ENCODE measurements at regions of chr4 and their contacts with region 1.

Region 1: DNA sequence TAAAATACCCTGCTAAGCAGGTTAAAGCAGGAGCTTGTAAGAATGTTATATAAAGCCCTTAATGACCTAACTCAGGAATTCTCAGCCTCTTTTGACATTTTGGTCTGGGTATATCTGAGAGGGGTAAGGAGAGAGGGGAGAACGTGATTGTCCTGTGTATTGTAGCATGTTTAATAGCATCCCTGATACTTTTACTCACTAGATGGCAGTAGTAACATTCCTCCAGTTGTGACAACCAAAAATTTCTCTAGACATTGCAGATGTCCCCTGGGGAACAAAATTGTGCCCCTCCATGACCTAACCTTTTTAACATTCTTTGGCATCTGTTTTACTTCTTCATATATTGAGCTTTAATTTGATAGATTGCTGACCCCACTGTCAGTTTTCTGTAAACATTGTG is 17.9 kb downstream of the SMARCA5 start:
- DNase-seq: peak; percentile 4
- ATAC-seq: peak; percentile 75
- H3K4me3 ChIP-seq: no peak overlapping the region
- H3K27ac ChIP-seq: no peak overlapping the region
- H3K4me1 ChIP-seq: no peaks in the 10 kb centered on the region
- H3K27me3 ChIP-seq: no peaks in the 10 kb centered on the region
- CTCF ChIP-seq: peak; percentile 40
- EP300 ChIP-seq: no peak
- POLR2A ChIP-seq: no peak
- RAD21 ChIP-seq: no peak

Region 2: DNA sequence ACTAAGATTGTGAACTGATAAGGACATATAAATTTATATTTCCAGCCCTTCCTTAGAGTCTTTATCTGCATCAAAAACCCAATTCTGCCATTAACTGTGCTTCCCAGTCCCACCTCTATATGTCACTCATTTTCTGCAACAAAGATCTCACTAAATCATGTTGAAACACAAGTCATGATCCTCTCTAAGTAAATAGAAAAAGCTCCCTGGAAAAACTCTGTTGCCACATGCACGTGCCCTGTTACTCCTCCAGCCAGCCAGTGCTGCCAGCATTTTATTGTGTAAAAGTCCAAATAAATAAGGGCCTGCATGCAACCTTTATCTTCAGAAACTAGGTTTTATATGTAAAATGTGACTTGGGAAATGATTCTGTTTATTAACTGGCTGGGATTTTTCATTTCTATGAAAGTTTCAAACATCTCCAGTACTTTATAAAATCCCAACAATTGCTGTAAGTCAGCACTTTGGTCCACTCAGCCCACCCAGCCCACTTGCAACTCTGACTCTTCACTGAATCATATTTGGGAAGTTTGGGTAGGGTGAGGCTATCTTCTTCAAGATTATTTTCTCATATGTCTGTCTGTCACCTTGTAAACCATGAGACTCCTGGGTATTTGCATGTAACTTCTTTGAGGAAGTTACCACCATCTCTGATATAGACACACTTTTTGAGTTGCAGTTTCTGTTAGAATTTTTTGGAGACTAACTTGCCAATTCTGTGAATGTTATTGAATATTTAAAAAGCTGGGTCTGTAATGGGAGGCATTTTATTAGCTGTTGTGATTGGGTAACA is 57.9 kb before region 1 on chr4:
- CTCF ChIA-PET with region 1: no interaction called
- POLR2A ChIA-PET with region 1: no interaction called
- in situ Hi-C with region 1: no loop called
- intact Hi-C with region 1: no loop called
- DNase-seq: peak; percentile 17
- ATAC-seq: no peak; the same call in 2 of the 3 replicates
- H3K4me3 ChIP-seq: no peak overlapping the region
- H3K27ac ChIP-seq: no peak overlapping the region
- H3K4me1 ChIP-seq: no peaks in the 10 kb centered on the region
- H3K27me3 ChIP-seq: no peaks in the 10 kb centered on the region
- CTCF ChIP-seq: no peak
- EP300 ChIP-seq: no peak
- POLR2A ChIP-seq: no peak
- RAD21 ChIP-seq: no peak

Region 3: DNA sequence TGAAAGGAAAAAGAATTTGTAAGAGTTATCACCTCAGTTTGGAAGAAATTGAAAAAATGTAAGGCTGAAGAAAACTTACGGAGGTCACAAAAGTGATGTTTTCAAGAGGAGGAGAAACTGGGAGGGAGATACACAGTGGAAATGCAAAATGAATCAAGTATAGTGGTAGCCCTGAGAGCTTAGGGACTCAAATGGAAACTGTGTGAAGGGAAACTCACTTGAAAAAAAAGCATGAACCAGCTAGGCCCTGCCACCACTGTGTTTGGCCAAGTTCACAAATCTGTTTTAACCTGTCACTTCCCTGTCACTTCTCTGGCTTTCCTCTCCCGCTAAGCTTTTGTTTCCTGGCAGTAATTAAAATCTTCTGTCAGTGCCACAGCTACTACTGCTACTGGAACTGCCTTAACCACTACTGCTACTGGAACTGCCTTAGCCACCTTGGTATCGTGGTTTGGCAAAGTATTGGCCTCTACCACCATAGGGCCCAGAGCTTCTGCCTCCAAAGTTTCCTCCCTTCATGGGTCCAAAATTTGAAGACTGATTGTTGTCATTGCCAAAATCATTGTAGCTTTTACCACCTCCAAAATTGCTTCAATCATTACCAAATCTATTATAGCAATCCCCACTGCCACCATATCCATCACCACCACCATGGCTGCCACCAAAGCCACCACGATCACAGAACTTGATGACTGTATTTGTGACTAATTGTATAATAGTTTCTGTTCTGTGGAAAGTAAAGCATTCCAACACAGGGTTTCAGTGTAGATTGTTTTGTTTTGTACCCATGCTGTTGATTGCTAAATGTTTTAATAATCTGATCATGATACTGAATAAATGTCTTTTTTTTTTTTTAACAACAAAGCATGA is 23.6 kb after region 1 on chr4:
- CTCF ChIA-PET with region 1: no interaction called
- POLR2A ChIA-PET with region 1: no interaction called
- in situ Hi-C with region 1: no loop called
- intact Hi-C with region 1: no loop called
- DNase-seq: no peak
- ATAC-seq: no peak
- H3K4me3 ChIP-seq: no peak overlapping the region
- H3K27ac ChIP-seq: no peak overlapping the region
- H3K4me1 ChIP-seq: peaks cover 14% of the 10 kb centered on the region
- H3K27me3 ChIP-seq: no peaks in the 10 kb centered on the region; a peak in 1 of 5 replicates
- CTCF ChIP-seq: no peak
- EP300 ChIP-seq: no peak
- POLR2A ChIP-seq: no peak
- RAD21 ChIP-seq: no peak

Region 4: GRCh38 chr4:145090380-145090779 is 1559.0 kb after region 1 on chr4:
- CTCF ChIA-PET with region 1: no interaction called
- POLR2A ChIA-PET with region 1: no interaction called
- in situ Hi-C with region 1: no loop called
- intact Hi-C with region 1: loop called (anchors 5 kb)
- DNase-seq: no peak
- ATAC-seq: no peak
- H3K4me3 ChIP-seq: no peak overlapping the region
- H3K27ac ChIP-seq: no peak overlapping the region
- H3K4me1 ChIP-seq: no peaks in the 10 kb centered on the region
- H3K27me3 ChIP-seq: no peaks in the 10 kb centered on the region
- CTCF ChIP-seq: no peak
- EP300 ChIP-seq: no peak
- POLR2A ChIP-seq: no peak
- RAD21 ChIP-seq: no peak

Measured in HepG2 (cell line).